Tibial artery (tissue), 4 donors: ENCODE measurements at regions of chr16 and their contacts with region 1.

Region 1: DNA sequence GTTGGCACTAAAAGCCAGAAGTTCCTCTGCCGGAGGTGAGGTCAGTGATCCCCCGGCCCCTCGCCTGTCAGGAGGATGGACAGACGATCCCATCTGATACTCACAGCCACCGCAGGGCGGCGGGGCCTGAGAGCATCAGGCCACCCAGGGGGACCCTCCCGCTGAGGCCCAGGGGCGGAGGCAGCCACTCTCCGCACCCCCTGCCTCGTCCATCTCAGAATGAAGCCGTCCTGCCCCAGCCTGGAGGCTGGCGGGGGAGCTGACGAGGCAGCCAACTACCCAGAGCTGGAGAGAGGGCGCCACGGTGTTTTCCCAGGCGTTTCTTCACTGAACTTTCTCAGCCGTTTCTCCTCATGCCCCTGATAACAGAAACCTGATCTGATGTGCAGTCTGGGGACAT is 22.6 kb downstream of the TPSD1 start:
- DNase-seq: no peak
- H3K4me3 ChIP-seq: no peak overlapping the region
- H3K27ac ChIP-seq: no peak overlapping the region
- H3K4me1 ChIP-seq: no peaks in the 10 kb centered on the region
- H3K27me3 ChIP-seq: peaks cover 0 to 88% of the 10 kb centered on the region in 2 donors
- CTCF ChIP-seq: no peak

Region 2: GRCh38 chr16:1036726-1037393 is 241.6 kb before region 1 on chr16:
- intact Hi-C with region 1: loop called (anchors 10 kb)
- DNase-seq: no peak
- H3K4me3 ChIP-seq: no peak overlapping the region
- H3K27ac ChIP-seq: no peak overlapping the region
- H3K4me1 ChIP-seq: no peaks in the 10 kb centered on the region
- H3K27me3 ChIP-seq: peaks cover 0 to 73% of the 10 kb centered on the region in 2 donors
- CTCF ChIP-seq: no peak

Region 3: GRCh38 chr16:1398826-1399601 is 120.5 kb after region 1 on chr16:
- intact Hi-C with region 1: no loop called
- DNase-seq: no peak
- H3K4me3 ChIP-seq: no peak overlapping the region
- H3K27ac ChIP-seq: no peak overlapping the region
- H3K4me1 ChIP-seq: no peaks in the 10 kb centered on the region
- H3K27me3 ChIP-seq: no peaks in the 10 kb centered on the region
- CTCF ChIP-seq: no peak